GM12878 (cell line): ENCODE measurements at regions of chr4 and their contacts with region 1.

Region 1: GRCh38 chr4:77156533-77156911 is 485 bp upstream of the CCNG2 start:
- DNase-seq: peak; percentile 98
- ATAC-seq: peak; percentile 92
- H3K4me3 ChIP-seq: peak overlapping the region; percentile 93
- H3K27ac ChIP-seq: peak overlapping the region; percentile 99
- H3K4me1 ChIP-seq: peaks cover 35% of the 10 kb centered on the region
- H3K27me3 ChIP-seq: no peaks in the 10 kb centered on the region
- CTCF ChIP-seq: no peak
- EP300 ChIP-seq: no peak
- POLR2A ChIP-seq: peak; percentile 76
- RAD21 ChIP-seq: no peak

Region 2: DNA sequence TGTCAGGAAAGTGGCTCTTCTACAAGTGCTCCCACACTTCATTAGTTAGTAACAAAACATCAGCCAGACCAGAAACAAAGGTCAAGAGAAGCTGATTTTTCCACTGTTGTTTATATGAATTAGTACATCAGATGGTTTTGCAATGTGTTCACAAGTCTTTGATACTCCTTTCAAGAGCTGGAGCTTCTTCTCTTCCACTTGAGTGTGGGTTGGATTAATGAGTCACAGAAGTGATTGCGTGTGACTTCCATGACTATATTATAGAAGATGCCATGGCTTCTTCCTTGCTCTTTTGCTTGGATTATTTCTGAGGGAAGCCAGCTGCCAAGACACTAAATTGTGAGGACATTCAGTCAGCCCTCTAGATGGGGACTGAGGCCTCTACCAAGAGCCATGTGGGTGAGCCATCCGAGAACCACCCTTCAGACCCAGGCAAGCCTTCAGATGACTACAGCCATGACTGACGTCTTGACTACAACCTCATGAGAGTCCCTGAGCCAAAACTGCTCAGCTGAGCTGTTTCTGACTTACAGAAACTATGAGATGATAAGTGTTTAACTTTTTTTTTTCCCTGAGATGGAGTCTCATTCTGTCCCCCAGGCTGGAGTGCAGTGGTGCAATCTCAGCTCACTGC is 276.7 kb before region 1 on chr4:
- CTCF ChIA-PET with region 1: no interaction called
- POLR2A ChIA-PET with region 1: no interaction called
- RAD21 ChIA-PET with region 1: no interaction called
- SMC1A ChIA-PET with region 1: no interaction called
- in situ Hi-C with region 1: no loop called
- intact Hi-C with region 1: no loop called
- DNase-seq: no peak
- ATAC-seq: no peak
- H3K4me3 ChIP-seq: no peak overlapping the region
- H3K27ac ChIP-seq: no peak overlapping the region
- H3K4me1 ChIP-seq: no peaks in the 10 kb centered on the region
- H3K27me3 ChIP-seq: peaks cover 0 to 2% of the 10 kb centered on the region in 2 experiments; a peak in 2 of 4 replicates
- CTCF ChIP-seq: no peak
- EP300 ChIP-seq: no peak
- POLR2A ChIP-seq: no peak
- RAD21 ChIP-seq: no peak

Region 3: DNA sequence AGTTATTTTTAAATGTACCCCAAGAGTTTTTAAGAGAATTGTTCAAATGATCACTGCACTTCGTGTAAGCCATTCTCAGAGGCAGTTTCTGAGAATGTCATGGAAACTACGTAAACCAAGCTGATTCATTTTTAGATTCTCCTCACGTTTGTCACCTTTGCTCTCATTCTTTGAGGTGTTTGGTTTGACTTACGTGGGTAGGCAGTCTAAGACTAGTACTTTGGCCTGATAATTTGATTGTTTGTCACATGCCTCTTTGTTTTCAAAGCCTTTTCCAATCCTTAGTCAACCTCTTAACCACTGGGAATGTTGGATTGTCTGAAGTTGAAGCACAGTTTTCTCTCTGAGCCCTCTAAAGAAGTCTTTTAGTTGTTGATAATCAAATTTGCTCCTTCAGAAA is 196.5 kb before region 1 on chr4:
- CTCF ChIA-PET with region 1: no interaction called
- POLR2A ChIA-PET with region 1: interaction called, 10 read pairs
- RAD21 ChIA-PET with region 1: no interaction called
- SMC1A ChIA-PET with region 1: no interaction called
- in situ Hi-C with region 1: no loop called
- intact Hi-C with region 1: no loop called
- DNase-seq: peak; percentile 56
- ATAC-seq: peak; percentile 90
- H3K4me3 ChIP-seq: no peak overlapping the region
- H3K27ac ChIP-seq: peak overlapping the region; percentile 0; the same call in 1 of the 2 replicates
- H3K4me1 ChIP-seq: no peaks in the 10 kb centered on the region
- H3K27me3 ChIP-seq: no peaks in the 10 kb centered on the region
- CTCF ChIP-seq: no peak
- EP300 ChIP-seq: peak; percentile 78 to 86; a peak in 3 of 4 replicates
- POLR2A ChIP-seq: no peak
- RAD21 ChIP-seq: peak; percentile 8; the same call in 1 of the 2 replicates

Region 4: GRCh38 chr4:77075869-77076799 is 80.4 kb before region 1 on chr4 and contains the start of gene CCNI:
- CTCF ChIA-PET with region 1: interaction called, 6 read pairs
- POLR2A ChIA-PET with region 1: interaction called, 12 read pairs
- RAD21 ChIA-PET with region 1: interaction called, 15 read pairs
- SMC1A ChIA-PET with region 1: interaction called, 23 read pairs
- in situ Hi-C with region 1: no loop called
- intact Hi-C with region 1: loop called (anchors 2 kb)
- DNase-seq: peak; percentile 92
- ATAC-seq: peak; percentile 77
- H3K4me3 ChIP-seq: peak within 1 kb of the TSS; percentile 97
- H3K27ac ChIP-seq: peak within 1 kb of the TSS; percentile 100
- H3K4me1 ChIP-seq: 0 out of 2 replicates have a peak, but pooled peaks cover 3% of the 10 kb centered on the region
- H3K27me3 ChIP-seq: no peaks in the 10 kb centered on the region
- CTCF ChIP-seq: no peak
- EP300 ChIP-seq: peak; percentile 4 to 78; a peak in 3 of 4 replicates
- POLR2A ChIP-seq: peak; percentile 82
- RAD21 ChIP-seq: no peak
- polyA plus RNA-seq, gene CCNI: 72.4 to 82.4 TPM

Region 5: DNA sequence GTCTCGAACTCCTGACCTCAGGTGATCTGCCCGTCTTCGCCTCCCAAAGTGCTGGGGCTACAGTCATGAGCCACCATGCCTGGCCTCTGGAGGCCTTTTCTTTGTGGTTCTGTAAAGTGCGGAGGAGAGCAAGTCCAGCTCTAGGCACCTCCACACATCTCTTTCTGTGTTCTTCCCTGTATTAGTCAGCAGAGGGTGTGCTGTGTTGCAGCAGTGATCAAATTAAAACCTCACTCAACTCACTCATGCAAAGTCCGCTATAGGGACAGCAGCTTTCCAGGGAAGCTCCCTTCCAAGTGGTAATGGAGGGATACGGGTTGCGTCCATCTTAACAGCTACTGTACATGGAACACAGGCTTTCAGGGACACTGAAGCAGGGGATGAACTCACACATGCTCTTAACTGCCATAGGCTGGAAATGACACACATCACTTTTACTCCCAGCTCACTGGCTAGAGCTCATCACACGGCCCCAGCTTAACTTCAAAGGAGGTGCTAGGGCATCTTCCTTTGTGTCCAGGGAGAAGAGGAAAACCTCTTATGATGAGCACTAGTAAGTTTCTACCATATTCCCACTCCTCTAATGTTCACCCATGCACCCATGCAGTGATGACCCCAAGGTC is 35.5 kb before region 1 on chr4:
- CTCF ChIA-PET with region 1: interaction called, 4 read pairs
- POLR2A ChIA-PET with region 1: no interaction called
- RAD21 ChIA-PET with region 1: interaction called, 11 read pairs
- SMC1A ChIA-PET with region 1: interaction called, 11 read pairs
- in situ Hi-C with region 1: no loop called
- intact Hi-C with region 1: no loop called
- DNase-seq: no peak
- ATAC-seq: peak; percentile 79
- H3K4me3 ChIP-seq: no peak overlapping the region
- H3K27ac ChIP-seq: no peak overlapping the region
- H3K4me1 ChIP-seq: no peaks in the 10 kb centered on the region
- H3K27me3 ChIP-seq: no peaks in the 10 kb centered on the region
- CTCF ChIP-seq: peak; percentile 17 to 38 (median 22); a peak in 4 of 6 replicates
- EP300 ChIP-seq: no peak
- POLR2A ChIP-seq: no peak
- RAD21 ChIP-seq: peak; percentile 52; the same call in 1 of the 2 replicates

Region 6: GRCh38 chr4:77141964-77142645 is 14.4 kb before region 1 on chr4:
- CTCF ChIA-PET with region 1: interaction called, 22 read pairs
- POLR2A ChIA-PET with region 1: interaction called, 3 read pairs
- RAD21 ChIA-PET with region 1: interaction called, 5 read pairs
- SMC1A ChIA-PET with region 1: interaction called, 16 read pairs
- in situ Hi-C with region 1: no loop called
- intact Hi-C with region 1: no loop called
- DNase-seq: no peak
- ATAC-seq: no peak
- H3K4me3 ChIP-seq: no peak overlapping the region
- H3K27ac ChIP-seq: no peak overlapping the region
- H3K4me1 ChIP-seq: no peaks in the 10 kb centered on the region
- H3K27me3 ChIP-seq: no peaks in the 10 kb centered on the region
- CTCF ChIP-seq: no peak
- EP300 ChIP-seq: no peak
- POLR2A ChIP-seq: no peak
- RAD21 ChIP-seq: no peak

Region 7: DNA sequence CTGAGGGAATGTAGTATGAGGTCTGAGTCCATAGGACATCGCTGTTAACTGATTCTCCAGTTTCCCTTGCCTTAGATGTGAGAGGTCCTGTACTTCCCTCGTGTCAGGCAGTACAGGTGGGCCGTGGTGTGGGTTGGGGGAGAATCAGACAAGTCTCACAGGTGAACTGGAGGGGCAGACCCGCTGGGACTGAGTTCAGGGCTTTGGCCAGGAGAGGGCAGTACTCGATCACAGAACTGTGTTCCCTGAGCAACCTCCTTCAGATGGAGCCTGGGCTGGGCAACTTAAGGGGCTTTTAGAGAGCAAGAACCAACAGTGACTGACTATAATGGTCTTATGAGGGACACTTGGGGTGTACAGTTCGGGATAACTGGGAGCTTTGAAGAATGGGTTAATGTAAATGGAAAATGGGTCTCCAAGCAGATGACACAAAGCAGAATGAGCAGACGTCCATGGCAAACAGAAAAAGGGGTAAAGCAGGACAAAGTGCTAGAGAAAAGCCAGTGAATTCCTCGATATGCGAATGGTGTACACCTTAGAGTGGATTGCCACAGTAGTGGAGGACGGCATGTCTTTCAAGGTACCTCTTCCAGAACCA is 84.0 kb after region 1 on chr4:
- CTCF ChIA-PET with region 1: no interaction called
- POLR2A ChIA-PET with region 1: no interaction called
- RAD21 ChIA-PET with region 1: no interaction called
- SMC1A ChIA-PET with region 1: no interaction called
- in situ Hi-C with region 1: no loop called
- intact Hi-C with region 1: no loop called
- DNase-seq: no peak
- ATAC-seq: peak; percentile 99
- H3K4me3 ChIP-seq: no peak overlapping the region
- H3K27ac ChIP-seq: no peak overlapping the region
- H3K4me1 ChIP-seq: peaks cover 1% of the 10 kb centered on the region; the same call in 1 of the 2 replicates
- H3K27me3 ChIP-seq: no peaks in the 10 kb centered on the region; a peak in 2 of 4 replicates
- CTCF ChIP-seq: peak; percentile 78 to 87 (median 86)
- EP300 ChIP-seq: no peak
- POLR2A ChIP-seq: no peak
- RAD21 ChIP-seq: peak; percentile 83